Activated naive CD4-positive, alpha-beta T cell treated with anti-CD3 and anti-CD28 coated beads for 36 hours (primary cell): ENCODE measurements at regions of chr19 and their contacts with region 1.

Region 1: DNA sequence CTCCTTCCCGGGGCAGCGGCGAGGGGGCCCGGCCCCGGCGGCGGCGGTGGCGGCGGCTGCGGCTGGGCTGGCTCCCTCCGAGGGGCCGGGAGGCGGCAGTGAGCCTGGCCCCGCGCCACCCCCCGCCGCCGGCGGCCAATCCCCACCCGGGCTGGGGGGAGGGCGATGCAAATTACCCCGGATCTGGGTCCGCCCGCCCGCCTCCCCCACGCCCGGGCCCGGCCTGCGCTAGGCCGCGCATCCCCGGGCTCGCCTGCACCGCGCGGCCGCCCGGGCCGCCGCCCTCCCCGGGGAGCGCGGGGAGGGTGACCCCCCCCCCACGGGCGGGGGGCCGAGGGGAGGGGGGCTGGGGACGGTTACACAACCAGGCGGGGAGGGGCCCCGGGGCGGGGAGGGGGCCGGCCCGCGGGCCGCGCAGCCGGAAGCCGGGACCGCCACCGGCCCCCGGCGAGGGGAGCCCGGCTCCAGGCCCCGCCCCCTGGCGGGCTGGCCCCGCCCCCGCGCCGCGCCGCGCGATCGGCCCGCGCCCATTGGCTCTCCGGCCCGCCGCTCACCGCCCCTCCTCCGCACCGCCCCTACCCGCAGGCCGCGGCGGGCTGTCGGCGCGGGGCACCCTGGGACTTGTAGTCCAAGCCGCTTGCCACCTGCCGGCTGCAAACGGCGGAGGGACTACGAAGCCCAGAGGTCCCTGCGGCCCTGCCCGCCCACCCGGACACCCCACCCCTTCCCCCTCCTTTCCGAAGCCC is 1.1 kb downstream of the ZBTB7A start:
- DNase-seq: peak; percentile 96
- H3K4me3 Mint-ChIP-seq: peak overlapping the region; percentile 56
- H3K27ac Mint-ChIP-seq: no peak overlapping the region
- H3K4me1 Mint-ChIP-seq: peaks cover 36% of the 10 kb centered on the region
- H3K27me3 Mint-ChIP-seq: no peaks in the 10 kb centered on the region

Region 2: DNA sequence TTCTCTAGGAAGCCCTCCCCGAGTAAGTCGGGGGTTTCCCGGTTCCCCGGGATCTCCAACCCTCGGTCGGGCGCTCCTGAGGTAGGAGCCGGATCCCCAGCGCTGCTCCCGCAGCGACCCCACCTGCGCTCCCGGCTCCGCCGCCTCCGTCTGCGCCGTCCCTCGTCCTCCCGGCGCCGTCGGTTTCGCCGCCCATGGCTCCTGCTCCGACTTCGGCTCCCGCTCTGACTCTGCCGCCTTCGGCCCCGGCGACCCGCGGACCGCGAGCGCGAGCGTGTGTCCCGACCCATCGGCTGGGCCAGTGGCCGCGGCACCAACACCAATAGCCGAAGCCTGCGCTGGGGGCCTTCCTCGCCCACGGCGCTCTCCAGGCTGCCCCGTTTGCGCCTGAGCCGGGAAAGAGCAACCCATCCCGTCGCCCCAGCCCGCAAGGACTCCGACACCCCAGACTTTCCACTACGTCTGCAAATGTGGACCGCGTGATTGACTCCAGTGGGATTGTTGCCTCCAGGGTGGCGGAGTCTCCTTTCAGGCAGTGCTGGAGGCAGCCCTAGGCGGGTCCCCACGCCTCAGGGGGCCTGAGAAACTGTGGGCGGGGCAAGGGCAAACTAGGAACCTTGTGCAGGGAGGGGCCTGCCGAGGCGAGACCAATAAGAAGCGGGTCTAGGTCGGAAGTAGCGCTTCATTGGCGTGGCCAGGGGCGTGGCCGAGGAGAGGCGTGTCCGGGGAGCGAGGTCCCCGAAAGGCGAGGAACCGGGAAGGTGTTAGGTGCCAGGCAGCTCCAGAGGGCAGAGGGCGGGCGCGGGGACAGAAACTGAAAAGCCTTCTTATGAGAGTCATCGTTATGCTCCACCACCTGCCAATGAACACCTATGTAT is 438.9 kb before region 1 on chr19 and contains the start of gene CACTIN:
- CTCF ChIA-PET with region 1: no interaction called
- intact Hi-C with region 1: loop called (anchors 5 kb)
- DNase-seq: peak; percentile 99
- H3K4me3 Mint-ChIP-seq: peak within 1 kb of the TSS; percentile 79
- H3K27ac Mint-ChIP-seq: peak within 1 kb of the TSS; percentile 98
- H3K4me1 Mint-ChIP-seq: peaks cover 29% of the 10 kb centered on the region
- H3K27me3 Mint-ChIP-seq: no peaks in the 10 kb centered on the region
- total RNA-seq, gene CACTIN: 24.6 to 27.0 TPM

Region 3: GRCh38 chr19:4014541-4015491 is 50.8 kb before region 1 on chr19:
- CTCF ChIA-PET with region 1: no interaction called
- intact Hi-C with region 1: no loop called
- DNase-seq: peak; percentile 37
- H3K4me3 Mint-ChIP-seq: no peak overlapping the region
- H3K27ac Mint-ChIP-seq: no peak overlapping the region
- H3K4me1 Mint-ChIP-seq: peaks cover 22% of the 10 kb centered on the region
- H3K27me3 Mint-ChIP-seq: no peaks in the 10 kb centered on the region

Region 4: DNA sequence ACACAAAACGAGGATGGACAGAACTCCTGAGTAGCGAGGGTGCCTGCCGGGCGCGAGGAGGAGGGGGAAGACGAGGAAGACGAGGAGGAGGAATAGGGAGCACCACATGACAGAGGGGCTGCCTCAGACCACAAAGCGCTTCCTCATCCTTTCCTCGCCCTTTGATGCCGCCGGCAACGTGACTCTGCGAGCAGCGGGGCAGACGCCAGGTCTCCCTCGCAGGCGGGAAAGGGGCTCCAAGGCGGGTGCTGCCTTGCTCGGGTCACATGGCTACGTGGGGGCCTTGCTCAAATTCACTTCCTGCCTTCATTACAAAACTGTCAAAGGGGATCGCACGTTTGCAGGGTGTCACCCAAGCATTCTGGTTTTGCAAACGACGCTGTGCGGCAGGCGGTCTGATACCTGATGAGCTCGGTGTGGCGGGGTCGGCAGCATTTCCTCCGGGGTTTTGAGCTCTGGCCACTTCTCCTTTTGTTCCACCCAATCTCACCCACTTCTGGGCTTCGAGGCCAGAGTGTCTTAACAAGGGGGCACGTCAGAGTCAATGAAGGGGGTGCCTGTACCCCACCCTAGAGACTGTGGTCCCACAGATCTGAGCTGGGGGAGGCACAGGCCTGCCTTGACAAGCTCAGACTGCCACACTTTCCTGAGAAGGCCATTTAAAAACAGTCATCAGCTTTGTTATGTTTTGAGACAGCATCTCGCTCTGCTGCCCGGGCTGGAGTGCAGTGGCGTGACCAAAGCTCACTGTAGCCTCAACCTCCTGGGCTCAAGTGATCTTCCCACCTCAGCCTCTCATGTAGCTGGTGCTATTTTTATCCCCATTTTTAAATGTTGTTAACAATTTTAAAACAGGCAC is 43.4 kb after region 1 on chr19:
- CTCF ChIA-PET with region 1: no interaction called
- intact Hi-C with region 1: loop called (anchors 5 kb)
- DNase-seq: peak; percentile 76
- H3K4me3 Mint-ChIP-seq: no peak overlapping the region
- H3K27ac Mint-ChIP-seq: peak overlapping the region; percentile 78
- H3K4me1 Mint-ChIP-seq: peaks cover 50% of the 10 kb centered on the region
- H3K27me3 Mint-ChIP-seq: no peaks in the 10 kb centered on the region

Region 5: GRCh38 chr19:4139614-4140236 is 74.1 kb after region 1 on chr19:
- CTCF ChIA-PET with region 1: no interaction called
- intact Hi-C with region 1: no loop called
- DNase-seq: peak; percentile 95
- H3K4me3 Mint-ChIP-seq: peak overlapping the region; percentile 30
- H3K27ac Mint-ChIP-seq: no peak overlapping the region
- H3K4me1 Mint-ChIP-seq: peaks cover 8% of the 10 kb centered on the region
- H3K27me3 Mint-ChIP-seq: peaks cover 2% of the 10 kb centered on the region

Region 6: DNA sequence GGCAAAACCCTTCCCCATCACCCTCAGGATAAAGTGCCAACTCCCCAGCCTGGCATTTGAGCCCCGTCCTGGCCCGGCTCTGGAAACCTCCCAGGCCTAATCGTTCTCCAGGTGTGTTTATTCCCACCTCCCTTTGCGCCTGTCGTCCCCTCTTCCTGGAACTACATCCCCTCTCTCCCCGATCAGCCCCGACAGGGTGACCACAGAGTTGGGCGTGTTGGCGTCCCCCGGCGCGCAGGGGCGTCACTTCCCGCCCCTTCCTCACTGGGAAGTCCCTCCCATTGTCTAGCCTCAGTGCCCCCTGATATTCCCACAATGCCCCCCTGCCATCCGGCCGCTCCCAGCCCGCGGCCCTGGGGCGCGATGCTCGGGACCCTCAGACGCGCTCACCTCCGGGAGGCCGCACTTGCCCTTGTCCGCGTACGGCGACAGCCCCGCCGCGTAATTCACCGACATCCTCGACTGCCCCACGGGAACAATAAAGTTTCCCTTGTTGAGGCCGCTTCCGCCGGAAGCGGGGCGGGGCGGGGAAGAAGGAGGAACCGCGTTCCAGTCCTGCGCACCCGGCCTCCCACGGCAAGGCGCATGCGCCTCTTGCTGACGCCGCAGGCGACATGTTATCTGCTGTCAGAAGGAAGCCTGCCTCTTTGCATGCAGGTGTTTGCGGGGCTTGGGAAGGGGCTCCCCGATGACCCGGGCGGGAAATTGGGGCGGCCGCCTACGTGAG is 116.6 kb after region 1 on chr19 and contains the starts of genes ANKRD24 and SIRT6:
- CTCF ChIA-PET with region 1: no interaction called
- intact Hi-C with region 1: loop called (anchors 5 kb)
- DNase-seq: peak; percentile 97
- H3K4me3 Mint-ChIP-seq: peak within 1 kb of the TSS; percentile 97
- H3K27ac Mint-ChIP-seq: peak within 1 kb of the TSS; percentile 93
- H3K4me1 Mint-ChIP-seq: peaks cover 34% of the 10 kb centered on the region
- H3K27me3 Mint-ChIP-seq: no peaks in the 10 kb centered on the region
- total RNA-seq, gene ANKRD24: 2.5 to 2.6 TPM
- total RNA-seq, gene SIRT6: 20.0 to 20.1 TPM

Region 7: GRCh38 chr19:4723367-4724187 is 658.0 kb after region 1 on chr19 and contains the start of gene DPP9:
- CTCF ChIA-PET with region 1: no interaction called
- intact Hi-C with region 1: loop called (anchors 5 kb)
- DNase-seq: peak; percentile 98
- H3K4me3 Mint-ChIP-seq: peak within 1 kb of the TSS; percentile 91
- H3K27ac Mint-ChIP-seq: peak within 1 kb of the TSS; percentile 97
- H3K4me1 Mint-ChIP-seq: peaks cover 22% of the 10 kb centered on the region
- H3K27me3 Mint-ChIP-seq: peaks cover 3% of the 10 kb centered on the region
- total RNA-seq, gene DPP9: 40.8 to 41.9 TPM